PC-9 (cell line): ENCODE measurements at regions of chr1 and their contacts with region 1.

Region 1: DNA sequence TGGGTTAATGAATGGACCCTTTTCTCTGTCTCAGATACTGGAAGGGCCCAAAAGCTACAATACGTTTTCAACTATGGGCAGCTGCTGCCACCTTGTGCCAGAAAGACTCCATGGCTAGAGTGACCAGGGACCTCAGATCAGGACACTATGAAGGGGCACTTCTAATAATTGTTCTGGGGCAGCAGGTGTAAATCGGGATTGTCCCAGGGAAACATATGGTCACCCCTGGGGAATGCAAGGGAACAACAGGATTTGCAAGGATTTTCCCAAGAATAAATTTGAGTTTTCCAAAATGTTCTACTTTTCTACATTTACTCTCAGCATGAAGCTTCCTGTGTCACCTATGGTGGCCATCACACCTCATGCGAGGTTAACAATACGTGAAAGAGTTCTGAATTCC is 12.0 kb upstream of the FCAMR start:
- DNase-seq: peak; percentile 46 to 51
- H3K4me3 ChIP-seq: no peak overlapping the region
- H3K27ac ChIP-seq: no peak overlapping the region
- H3K4me1 ChIP-seq: no peaks in the 10 kb centered on the region
- H3K27me3 ChIP-seq: no peaks in the 10 kb centered on the region
- CTCF ChIP-seq: peak; percentile 85

Region 2: GRCh38 chr1:206489980-206490770 is 492.0 kb before region 1 on chr1:
- CTCF ChIA-PET with region 1: no interaction called
- POLR2A ChIA-PET with region 1: no interaction called
- intact Hi-C with region 1: loop called (anchors 5 kb)
- DNase-seq: peak; percentile 51 to 71
- H3K4me3 ChIP-seq: no peak overlapping the region
- H3K27ac ChIP-seq: no peak overlapping the region
- H3K4me1 ChIP-seq: no peaks in the 10 kb centered on the region
- H3K27me3 ChIP-seq: no peaks in the 10 kb centered on the region
- CTCF ChIP-seq: peak; percentile 91

Region 3: GRCh38 chr1:206725109-206725963 is 256.9 kb before region 1 on chr1:
- CTCF ChIA-PET with region 1: no interaction called
- POLR2A ChIA-PET with region 1: no interaction called
- intact Hi-C with region 1: loop called (anchors 5 kb)
- DNase-seq: peak in 1 of 2 experiments; percentile 21
- H3K4me3 ChIP-seq: no peak overlapping the region
- H3K27ac ChIP-seq: no peak overlapping the region
- H3K4me1 ChIP-seq: peaks cover 44% of the 10 kb centered on the region
- H3K27me3 ChIP-seq: no peaks in the 10 kb centered on the region
- CTCF ChIP-seq: no peak; the same call in 1 of the 2 replicates

Region 4: DNA sequence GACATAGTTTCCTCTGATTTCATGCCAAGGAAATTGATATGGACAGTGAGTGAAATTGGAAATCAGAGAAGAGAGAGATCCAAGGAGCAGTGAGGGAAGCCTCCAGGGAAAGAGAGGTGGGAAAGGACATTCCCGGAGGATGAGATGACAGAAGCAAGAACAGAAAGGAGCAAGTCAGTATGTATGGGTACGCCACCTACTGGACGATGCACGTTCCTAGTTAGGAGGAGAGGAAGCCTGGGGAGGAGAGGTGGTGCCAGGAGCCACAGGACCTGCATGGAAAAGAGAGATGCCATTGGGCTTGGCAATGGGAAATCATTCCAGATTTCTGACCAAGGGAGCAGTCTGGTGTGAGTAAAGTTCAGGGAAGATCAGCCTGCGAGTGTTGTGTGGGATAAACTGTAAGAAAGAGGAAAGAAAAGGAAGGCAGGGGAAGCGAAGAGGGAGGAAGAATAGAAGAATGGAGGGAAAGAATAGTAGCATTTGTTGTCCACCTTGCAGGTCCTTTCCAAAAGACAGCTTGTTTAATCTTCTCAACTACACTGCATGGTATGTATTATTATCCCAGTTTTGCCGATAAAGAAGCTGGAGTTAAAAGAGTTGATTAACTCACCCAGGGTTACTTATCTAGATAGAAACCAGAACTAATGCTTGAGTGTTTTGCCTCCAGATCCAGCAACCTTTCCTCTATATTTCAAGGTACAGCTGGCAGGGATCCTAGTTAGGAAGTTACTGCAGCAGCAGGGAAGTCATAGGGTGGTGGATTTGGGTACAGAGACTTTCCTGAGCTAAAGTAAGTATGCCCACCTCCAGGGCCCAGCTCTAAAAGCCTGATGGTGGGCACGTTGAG is 23.0 kb after region 1 on chr1:
- CTCF ChIA-PET with region 1: interaction called, 12 read pairs
- POLR2A ChIA-PET with region 1: interaction called, 12 read pairs
- intact Hi-C with region 1: loop called (anchors 1 kb)
- DNase-seq: peak; percentile 50 to 59
- H3K4me3 ChIP-seq: no peak overlapping the region
- H3K27ac ChIP-seq: peak overlapping the region; percentile 93
- H3K4me1 ChIP-seq: peaks cover 80% of the 10 kb centered on the region
- H3K27me3 ChIP-seq: no peaks in the 10 kb centered on the region
- CTCF ChIP-seq: peak; percentile 71

Region 5: DNA sequence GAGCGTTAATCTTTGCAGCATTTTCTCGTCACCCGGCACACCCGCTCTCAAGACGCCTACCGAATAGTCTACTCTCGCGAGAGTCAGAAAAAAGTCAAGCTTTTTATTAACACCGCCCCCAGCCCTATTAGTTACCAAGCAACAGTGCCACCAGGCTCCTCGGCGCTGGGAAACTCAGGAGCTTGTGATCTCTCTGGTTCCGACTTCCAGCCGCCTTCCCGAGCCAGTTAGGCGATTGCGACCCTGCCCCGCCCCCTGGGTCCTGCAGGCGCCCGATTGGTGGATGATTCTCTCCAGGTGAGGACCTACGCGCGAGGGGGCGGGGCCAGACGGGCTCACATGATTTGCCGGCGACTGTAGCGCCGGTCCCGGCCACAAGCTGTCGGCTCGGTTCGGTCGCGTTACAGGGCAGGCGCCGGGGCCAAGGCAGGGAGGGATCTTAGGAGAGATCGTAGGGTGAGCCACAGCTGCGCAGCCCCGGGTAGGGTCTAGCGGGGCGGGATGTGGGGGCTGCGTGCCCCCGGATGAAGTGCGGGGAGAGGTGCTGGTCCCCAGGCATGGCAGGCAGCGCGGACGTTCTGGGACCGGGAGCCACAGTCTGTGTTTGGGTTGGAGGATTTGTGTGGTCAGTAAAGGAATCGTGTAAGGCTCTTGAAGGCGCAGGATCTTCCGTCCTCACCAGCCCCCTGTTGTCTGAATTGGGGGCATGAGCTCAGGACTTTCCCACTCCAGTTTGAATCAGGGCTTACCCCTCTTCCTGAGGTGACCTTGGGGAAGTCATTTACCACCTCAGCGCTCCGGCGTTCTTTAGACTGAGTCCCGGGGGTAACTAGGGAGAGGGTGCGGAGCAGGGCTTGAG is 70.9 kb after region 1 on chr1 and contains the start of gene PFKFB2:
- CTCF ChIA-PET with region 1: interaction called, 4 read pairs
- POLR2A ChIA-PET with region 1: interaction called, 4 read pairs
- intact Hi-C with region 1: loop called (anchors 2 kb)
- DNase-seq: peak; percentile 98 to 99
- H3K4me3 ChIP-seq: peak within 1 kb of the TSS; percentile 93
- H3K27ac ChIP-seq: peak within 1 kb of the TSS; percentile 92
- H3K4me1 ChIP-seq: peaks cover 26% of the 10 kb centered on the region
- H3K27me3 ChIP-seq: no peaks in the 10 kb centered on the region
- CTCF ChIP-seq: no peak; the same call in 1 of the 2 replicates
- total RNA-seq, gene PFKFB2: 16.3 and 28.0 TPM in 2 replicates

Region 6: DNA sequence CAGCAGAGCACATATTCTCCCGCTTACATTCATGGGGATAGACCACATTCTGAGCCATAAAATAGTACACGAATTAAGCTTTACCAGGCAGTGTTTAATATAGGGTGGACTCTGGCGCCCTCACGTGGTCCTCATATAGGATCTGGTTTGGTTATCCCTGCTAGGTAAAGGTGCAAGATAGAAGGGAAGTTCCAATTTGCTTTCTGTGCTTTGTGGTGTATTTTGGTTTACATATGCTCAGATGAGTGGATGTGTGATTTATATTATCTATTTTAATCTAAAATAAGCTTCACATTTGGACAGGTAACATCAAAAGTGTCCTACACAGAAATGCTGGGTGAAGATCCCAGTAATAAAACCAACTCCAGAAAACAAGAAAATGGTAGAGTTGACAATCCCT is 517.4 kb after region 1 on chr1:
- CTCF ChIA-PET with region 1: no interaction called
- POLR2A ChIA-PET with region 1: no interaction called
- intact Hi-C with region 1: loop called (anchors 1 kb)
- DNase-seq: peak; percentile 62 to 64
- H3K4me3 ChIP-seq: no peak overlapping the region
- H3K27ac ChIP-seq: no peak overlapping the region
- H3K4me1 ChIP-seq: no peaks in the 10 kb centered on the region
- H3K27me3 ChIP-seq: peaks cover 28% of the 10 kb centered on the region
- CTCF ChIP-seq: peak; percentile 87